ENCODE measurements at regions of chr4 and their contacts with region 1.

Region 1: DNA sequence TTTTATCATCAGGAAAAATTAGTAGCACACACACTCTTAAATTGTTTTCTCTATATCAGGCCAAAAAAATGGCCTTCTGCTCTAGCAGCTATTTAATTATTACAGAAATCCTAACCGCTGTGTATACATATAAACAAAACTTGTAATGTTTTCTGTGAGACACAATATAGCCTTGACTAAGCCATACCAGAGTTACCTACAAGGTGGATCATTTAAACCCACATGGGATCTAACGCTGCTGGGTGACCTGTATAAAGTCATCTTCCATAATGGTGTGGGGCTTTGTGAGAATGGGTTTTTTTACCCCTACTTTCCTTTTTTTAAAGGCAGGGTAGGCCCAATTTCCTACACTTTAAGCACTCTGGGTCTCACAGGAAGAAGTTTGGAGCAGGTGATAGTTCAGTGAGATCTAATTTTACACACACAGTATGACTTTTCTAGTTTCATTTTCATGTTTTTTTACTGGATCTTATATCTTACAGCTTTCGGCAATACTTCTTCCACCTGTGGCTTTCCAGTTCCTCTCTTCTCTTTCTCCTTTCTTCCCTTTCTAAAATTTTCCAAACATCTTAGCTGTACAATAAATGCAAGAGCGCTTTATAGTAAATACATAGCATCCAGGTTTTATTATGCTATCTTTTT is 66.9 kb upstream of the MMAA start:
- DNase-seq: no peak
- H3K4me3 ChIP-seq: no peak overlapping the region
- H3K27ac ChIP-seq: no peak overlapping the region
- H3K27me3 ChIP-seq: no peaks in the 10 kb centered on the region
- CTCF ChIP-seq: no peak

Region 2: DNA sequence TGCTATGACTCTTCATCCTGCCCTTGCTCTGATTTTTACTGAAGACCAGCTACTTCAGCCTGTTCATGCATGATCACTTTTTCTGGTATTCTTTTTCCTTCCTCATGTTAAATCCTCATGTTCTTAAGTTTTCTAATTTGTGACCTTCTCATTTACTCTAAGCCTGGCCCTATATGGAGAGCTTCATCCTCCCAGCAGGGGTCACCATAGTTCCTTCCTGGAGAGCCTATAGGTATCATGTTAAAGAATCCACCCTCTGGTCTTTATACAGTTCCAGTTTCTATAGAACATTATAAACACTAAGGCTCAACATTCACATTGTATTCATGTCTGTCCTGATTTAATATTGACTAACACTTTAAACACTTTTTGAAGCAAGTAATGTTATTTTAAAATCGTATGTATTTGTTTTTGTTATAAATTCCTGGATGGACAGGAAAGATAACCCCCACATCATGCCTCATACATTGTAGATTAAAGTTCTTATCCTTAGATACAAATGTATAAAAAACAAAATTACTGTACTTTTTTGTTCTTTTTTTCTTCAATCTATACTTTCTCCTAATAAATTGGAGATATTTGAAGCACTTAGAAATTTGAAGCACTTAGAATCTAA is 318.1 kb before region 1 on chr4:
- CTCF ChIA-PET with region 1: interaction called, 19 read pairs
- POLR2A ChIA-PET with region 1: no interaction called
- DNase-seq: peak; percentile 34
- H3K4me3 ChIP-seq: no peak overlapping the region
- H3K27ac ChIP-seq: no peak overlapping the region
- H3K27me3 ChIP-seq: no peaks in the 10 kb centered on the region
- CTCF ChIP-seq: peak; percentile 95

Measured in AG04450 (cell line).